Caco-2 (cell line): ENCODE measurements at regions of chr10 and their contacts with region 1.

Region 1: DNA sequence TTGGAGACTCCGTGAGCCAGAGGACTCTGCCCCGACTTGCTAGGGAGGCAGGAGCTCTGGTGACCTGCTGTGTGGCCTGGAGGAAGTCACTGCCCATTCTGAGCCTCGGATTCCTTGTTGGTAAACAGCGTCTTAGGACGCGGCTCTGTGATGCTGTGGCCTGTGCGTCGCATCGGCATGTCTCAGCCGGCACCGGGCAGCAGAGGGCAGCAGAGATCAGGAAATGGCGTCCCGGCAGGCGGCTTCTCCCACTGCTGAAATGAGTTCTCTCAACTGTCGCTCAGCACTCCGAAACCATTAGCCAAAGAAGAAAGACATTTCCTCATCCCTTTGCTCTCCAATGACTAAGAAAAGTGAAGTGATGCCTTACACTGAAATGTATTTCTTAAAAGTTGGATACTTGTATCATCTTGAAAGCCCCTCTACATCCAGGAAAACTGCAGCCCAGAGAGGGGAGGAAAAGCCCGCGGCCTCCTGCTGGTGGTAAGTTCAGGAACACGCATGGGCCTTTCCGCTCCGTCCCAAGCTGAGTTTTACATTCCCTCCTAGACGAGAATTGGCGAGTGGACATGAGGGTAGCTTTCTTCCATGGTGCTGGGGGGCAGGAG is 91.7 kb downstream of the WDR11 start:
- DNase-seq: peak; percentile 81 to 92
- H3K4me3 ChIP-seq: no peak overlapping the region
- H3K4me3 Mint-ChIP-seq: no peak overlapping the region
- H3K27ac Mint-ChIP-seq: peak overlapping the region; percentile 83
- H3K4me1 ChIP-seq: peaks cover 13% of the 10 kb centered on the region
- H3K4me1 Mint-ChIP-seq: peaks cover 13% of the 10 kb centered on the region
- H3K27me3 ChIP-seq: no peaks in the 10 kb centered on the region
- H3K27me3 Mint-ChIP-seq: no peaks in the 10 kb centered on the region
- CTCF ChIP-seq: peak; percentile 85 to 93

Region 2: GRCh38 chr10:120979435-120980278 is 36.7 kb after region 1 on chr10:
- CTCF ChIA-PET with region 1: no interaction called
- POLR2A ChIA-PET with region 1: no interaction called
- intact Hi-C with region 1: loop called (anchors 1 kb)
- DNase-seq: peak; percentile 94 to 97
- H3K4me3 ChIP-seq: peak overlapping the region; percentile 83
- H3K4me3 Mint-ChIP-seq: peak overlapping the region; percentile 82
- H3K27ac Mint-ChIP-seq: peak overlapping the region; percentile 93
- H3K4me1 ChIP-seq: peaks cover 60% of the 10 kb centered on the region
- H3K4me1 Mint-ChIP-seq: peaks cover 57% of the 10 kb centered on the region
- H3K27me3 ChIP-seq: no peaks in the 10 kb centered on the region
- H3K27me3 Mint-ChIP-seq: no peaks in the 10 kb centered on the region
- CTCF ChIP-seq: no peak

Region 3: DNA sequence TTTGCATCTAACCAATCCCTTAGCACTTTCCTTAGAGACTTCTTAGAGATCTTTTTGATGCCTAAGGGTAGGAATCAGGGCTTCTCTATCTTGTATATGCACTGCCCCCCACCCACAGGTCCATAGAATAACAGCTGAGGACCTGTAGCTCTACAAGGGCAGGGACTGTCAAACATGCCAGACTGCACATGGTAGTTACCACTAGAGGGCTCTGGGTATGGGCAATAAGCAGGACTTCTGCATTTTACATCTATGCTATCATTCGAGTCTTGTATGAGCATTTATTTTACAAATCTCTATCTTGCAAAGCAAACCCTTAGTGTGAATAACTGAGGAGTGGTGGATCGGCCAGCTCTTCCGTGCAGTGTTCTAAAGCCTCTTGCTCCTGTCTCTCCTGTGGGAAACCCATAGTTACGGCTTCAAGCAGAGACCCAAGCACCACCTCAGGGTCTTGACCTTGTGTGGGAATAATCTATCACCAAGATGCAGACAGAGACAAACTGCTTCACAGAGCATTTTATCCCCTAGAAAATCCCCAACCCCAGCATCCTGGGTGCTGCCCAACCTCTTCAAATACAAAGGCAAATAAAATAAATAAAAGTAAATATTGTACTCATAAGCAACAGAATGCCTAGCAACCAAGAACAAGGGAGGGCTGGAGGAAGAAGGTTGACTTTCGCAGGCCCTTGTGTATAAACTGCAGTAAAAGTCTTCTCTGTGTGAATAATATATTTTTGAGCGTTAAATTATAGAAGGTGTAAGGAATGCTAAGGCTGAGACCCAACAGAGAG is 127.6 kb after region 1 on chr10:
- CTCF ChIA-PET with region 1: interaction called, 5 read pairs
- POLR2A ChIA-PET with region 1: no interaction called
- intact Hi-C with region 1: loop called (anchors 1 kb)
- DNase-seq: peak; percentile 57
- H3K4me3 ChIP-seq: no peak overlapping the region
- H3K4me3 Mint-ChIP-seq: no peak overlapping the region
- H3K27ac Mint-ChIP-seq: peak overlapping the region; percentile 81
- H3K4me1 ChIP-seq: peaks cover 35% of the 10 kb centered on the region
- H3K4me1 Mint-ChIP-seq: peaks cover 30% of the 10 kb centered on the region
- H3K27me3 ChIP-seq: no peaks in the 10 kb centered on the region
- H3K27me3 Mint-ChIP-seq: no peaks in the 10 kb centered on the region
- CTCF ChIP-seq: peak; percentile 44 to 55

Region 4: GRCh38 chr10:121500674-121501332 is 557.9 kb after region 1 on chr10:
- CTCF ChIA-PET with region 1: no interaction called
- POLR2A ChIA-PET with region 1: no interaction called
- intact Hi-C with region 1: loop called (anchors 10 kb)
- DNase-seq: peak; percentile 89 to 94
- H3K4me3 ChIP-seq: no peak overlapping the region
- H3K4me3 Mint-ChIP-seq: peak overlapping the region; percentile 56
- H3K27ac Mint-ChIP-seq: peak overlapping the region; percentile 90
- H3K4me1 ChIP-seq: peaks cover 47% of the 10 kb centered on the region
- H3K4me1 Mint-ChIP-seq: peaks cover 32% of the 10 kb centered on the region
- H3K27me3 ChIP-seq: no peaks in the 10 kb centered on the region
- H3K27me3 Mint-ChIP-seq: no peaks in the 10 kb centered on the region
- CTCF ChIP-seq: no peak

Region 5: GRCh38 chr10:121900443-121901174 is 957.7 kb after region 1 on chr10:
- CTCF ChIA-PET with region 1: no interaction called
- POLR2A ChIA-PET with region 1: no interaction called
- intact Hi-C with region 1: loop called (anchors 5 kb)
- DNase-seq: peak in 1 of 2 experiments; percentile 72
- H3K4me3 ChIP-seq: no peak overlapping the region
- H3K4me3 Mint-ChIP-seq: no peak overlapping the region
- H3K27ac Mint-ChIP-seq: no peak overlapping the region
- H3K4me1 ChIP-seq: no peaks in the 10 kb centered on the region; the same call in 1 of the 2 replicates
- H3K4me1 Mint-ChIP-seq: no peaks in the 10 kb centered on the region
- H3K27me3 ChIP-seq: no peaks in the 10 kb centered on the region
- H3K27me3 Mint-ChIP-seq: no peaks in the 10 kb centered on the region
- CTCF ChIP-seq: peak; percentile 60 to 73